AG04449 (cell line): ENCODE measurements at regions of chr9 and their contacts with region 1.

Region 1: GRCh38 chr9:109817846-109818472 is 38.0 kb downstream of the PALM2AKAP2 start:
- DNase-seq: peak; percentile 90
- H3K4me3 ChIP-seq: no peak overlapping the region
- CTCF ChIP-seq: peak; percentile 59

Region 2: DNA sequence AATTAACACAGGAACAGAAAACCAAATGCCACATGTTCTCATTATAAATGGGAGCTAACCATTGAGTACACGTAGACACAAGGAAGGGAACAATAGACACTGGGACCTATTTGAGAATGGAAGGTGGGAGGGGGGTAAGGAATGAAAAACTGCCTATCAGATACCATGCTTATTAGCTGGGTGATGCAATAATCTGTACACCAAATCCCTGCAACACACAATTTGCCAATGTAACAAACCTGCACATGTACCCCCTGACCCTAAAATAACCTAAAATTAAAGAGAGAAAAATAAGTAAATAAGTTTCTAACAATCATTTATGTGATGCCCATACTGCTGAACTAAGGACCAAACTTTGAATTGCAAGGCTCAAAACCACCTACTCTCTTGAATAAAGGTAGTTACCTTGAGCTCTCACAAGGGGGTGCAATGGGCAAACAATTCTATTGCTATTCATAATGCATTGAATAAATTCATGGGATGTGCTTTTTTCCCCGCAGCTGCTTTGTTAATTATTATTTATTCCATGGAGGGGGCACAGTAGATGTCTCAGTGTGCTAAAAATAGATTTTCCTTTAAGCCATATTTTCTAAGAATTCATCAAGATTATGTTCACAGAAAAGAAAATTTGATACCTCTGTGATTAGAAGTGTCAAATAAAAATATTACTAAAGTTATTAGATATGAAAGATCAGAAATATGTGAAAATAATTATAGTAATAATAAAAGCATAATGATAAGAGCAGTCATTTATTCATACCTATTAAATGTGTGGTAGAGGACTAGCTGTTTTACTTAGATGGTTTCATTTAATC is 243.7 kb before region 1 on chr9:
- CTCF ChIA-PET with region 1: interaction called, 78 read pairs
- POLR2A ChIA-PET with region 1: interaction called, 3 read pairs
- DNase-seq: peak; percentile 3
- H3K4me3 ChIP-seq: no peak overlapping the region
- CTCF ChIP-seq: peak; percentile 62

Region 3: GRCh38 chr9:109779711-109780452 is 38.1 kb before region 1 on chr9 and contains the start of gene PALM2AKAP2:
- CTCF ChIA-PET with region 1: interaction called, 11 read pairs
- POLR2A ChIA-PET with region 1: interaction called, 8 read pairs
- DNase-seq: no peak
- H3K4me3 ChIP-seq: peak within 1 kb of the TSS; percentile 88
- CTCF ChIP-seq: peak; percentile 49

Region 4: GRCh38 chr9:109799792-109800191 is 18.2 kb before region 1 on chr9:
- CTCF ChIA-PET with region 1: interaction called, 52 read pairs
- POLR2A ChIA-PET with region 1: interaction called, 3 read pairs
- DNase-seq: peak; percentile 64
- H3K4me3 ChIP-seq: no peak overlapping the region
- CTCF ChIP-seq: no peak

Region 5: GRCh38 chr9:109806506-109807115 is 11.3 kb before region 1 on chr9:
- CTCF ChIA-PET with region 1: interaction called, 52 read pairs
- POLR2A ChIA-PET with region 1: interaction called, 3 read pairs
- DNase-seq: no peak
- H3K4me3 ChIP-seq: no peak overlapping the region
- CTCF ChIP-seq: no peak

Region 6: DNA sequence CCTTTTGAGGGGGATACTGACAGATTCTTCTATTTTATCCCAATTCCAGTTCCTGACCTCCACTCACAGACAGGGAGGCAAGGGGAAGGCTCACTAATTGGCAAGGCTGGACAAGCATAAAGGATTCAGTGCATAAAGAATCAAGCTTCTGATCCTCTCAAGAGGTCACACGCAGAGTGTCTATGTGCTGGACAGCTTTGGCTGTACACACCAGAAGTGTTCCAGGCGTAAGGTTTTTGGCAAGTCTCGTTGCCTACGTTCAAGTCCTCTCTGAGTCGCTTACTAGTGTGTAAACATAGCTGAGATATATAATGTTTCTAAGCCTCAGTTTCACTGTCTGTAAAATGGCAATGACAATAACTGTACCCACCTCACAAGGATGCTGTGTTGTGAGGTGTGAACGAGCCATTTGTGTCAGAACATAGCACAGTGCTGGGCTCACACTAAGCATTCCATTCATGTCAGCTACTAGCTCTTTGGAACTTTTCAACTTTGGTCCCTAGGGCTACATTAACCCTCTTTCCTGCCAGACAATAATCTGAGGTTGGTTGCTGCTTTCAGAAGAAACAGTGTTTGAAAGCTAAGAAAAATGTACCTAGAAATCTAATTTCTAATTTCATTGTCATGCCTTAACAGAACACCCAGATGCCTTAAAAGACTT is 14.2 kb after region 1 on chr9:
- CTCF ChIA-PET with region 1: interaction called, 19 read pairs
- POLR2A ChIA-PET with region 1: no interaction called
- DNase-seq: no peak
- H3K4me3 ChIP-seq: no peak overlapping the region
- CTCF ChIP-seq: no peak

Region 7: GRCh38 chr9:109843641-109844040 is 25.7 kb after region 1 on chr9:
- CTCF ChIA-PET with region 1: interaction called, 14 read pairs
- POLR2A ChIA-PET with region 1: no interaction called
- DNase-seq: no peak
- H3K4me3 ChIP-seq: no peak overlapping the region
- CTCF ChIP-seq: no peak